ENCODE measurements at regions of chr21 and their contacts with region 1.

Region 1: DNA sequence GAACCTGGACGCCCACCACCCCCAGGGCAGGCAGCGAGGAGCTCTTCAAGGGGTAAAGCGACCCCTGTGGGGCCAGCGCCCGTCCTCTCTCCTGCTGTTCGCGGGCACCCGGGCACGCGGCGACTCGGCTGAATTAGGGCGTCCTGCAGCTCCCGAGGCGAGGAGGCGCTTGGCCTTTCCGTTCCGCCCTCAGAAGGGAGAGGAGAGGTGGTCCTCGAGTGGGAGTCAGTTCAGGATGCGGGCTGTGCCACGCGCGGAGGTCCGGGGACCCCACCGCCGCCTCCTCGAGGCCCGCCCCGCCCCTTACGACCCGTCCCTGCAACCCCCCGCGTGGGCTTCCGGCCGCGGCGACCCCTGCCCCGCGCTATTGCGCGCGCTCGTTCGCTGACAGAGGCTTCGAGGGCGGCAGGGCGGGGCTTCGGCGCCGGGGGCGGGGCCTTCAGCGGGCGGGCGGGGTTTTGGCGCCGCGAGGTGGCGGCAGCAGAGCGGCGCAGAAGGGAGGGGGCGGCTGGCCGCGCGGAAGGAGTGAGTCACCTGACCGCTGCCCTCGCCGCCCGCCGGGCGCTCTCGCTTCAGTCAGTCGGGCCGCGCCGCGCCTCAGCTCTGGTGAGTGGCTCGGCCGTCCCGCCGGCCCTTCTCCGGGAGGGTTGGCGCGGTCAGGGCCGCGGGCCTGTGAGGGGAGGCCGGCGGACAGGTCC is at the start of gene BACH1:
- DNase-seq: peak; percentile 76 to 89
- ATAC-seq: peak; percentile 69 to 72
- H3K4me3 ChIP-seq: peak within 1 kb of the TSS; percentile 69 to 87 (median 72)
- H3K27ac ChIP-seq: peak within 1 kb of the TSS; percentile 89 to 97 (median 94)
- H3K4me1 ChIP-seq: peaks cover 34 to 36% of the 10 kb centered on the region in 2 donors
- H3K27me3 ChIP-seq: no peaks in the 10 kb centered on the region
- CTCF ChIP-seq: peak in 3 of 5 experiments; percentile 55 to 69 (median 64)
- POLR2A ChIP-seq: peak; percentile 93 to 94
- total RNA-seq, gene BACH1: 52.4 to 72.7 (median 62.7) TPM

Region 2: GRCh38 chr21:29078869-29079767 is 219.4 kb before region 1 on chr21:
- in situ Hi-C with region 1: loop called in 2 of 4 experiments (anchors 10 to 25 kb)
- intact Hi-C with region 1: loop called (anchors 5 kb)
- DNase-seq: no peak
- ATAC-seq: no peak
- H3K4me3 ChIP-seq: no peak overlapping the region
- H3K27ac ChIP-seq: no peak overlapping the region
- H3K4me1 ChIP-seq: no peaks in the 10 kb centered on the region
- H3K27me3 ChIP-seq: no peaks in the 10 kb centered on the region
- CTCF ChIP-seq: no peak
- POLR2A ChIP-seq: no peak

Region 3: DNA sequence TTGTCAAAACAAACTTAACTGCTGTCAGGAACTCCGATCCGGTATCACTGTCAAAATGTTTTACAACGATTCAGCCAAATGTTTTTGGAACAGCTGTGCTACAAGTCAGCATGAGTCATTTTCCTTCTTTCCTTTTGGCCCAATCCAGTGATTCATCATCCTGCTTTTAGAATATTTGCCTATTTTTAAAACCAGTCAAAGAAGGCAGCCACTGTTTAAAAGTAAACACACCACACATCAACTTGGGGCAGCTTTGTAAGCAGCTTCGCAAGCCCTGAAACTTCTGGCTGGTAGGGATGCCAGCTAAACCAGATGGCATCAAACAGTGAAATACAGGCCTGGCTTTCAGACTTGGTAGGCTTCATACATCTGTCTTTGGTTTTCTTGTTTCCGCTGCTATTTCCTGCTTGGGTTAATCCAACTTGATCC is 153.1 kb before region 1 on chr21:
- in situ Hi-C with region 1: loop called in 1 of 4 experiments (anchors 25 kb)
- intact Hi-C with region 1: loop called (anchors 5 kb)
- DNase-seq: peak; percentile 74 to 81
- ATAC-seq: peak; percentile 93 to 94
- H3K4me3 ChIP-seq: no peak overlapping the region
- H3K27ac ChIP-seq: peak overlapping the region; percentile 78 to 91 (median 84)
- H3K4me1 ChIP-seq: peaks cover 59 to 60% of the 10 kb centered on the region in 2 donors
- H3K27me3 ChIP-seq: no peaks in the 10 kb centered on the region
- CTCF ChIP-seq: no peak
- POLR2A ChIP-seq: peak in 1 of 2 donors; percentile 41

Region 4: DNA sequence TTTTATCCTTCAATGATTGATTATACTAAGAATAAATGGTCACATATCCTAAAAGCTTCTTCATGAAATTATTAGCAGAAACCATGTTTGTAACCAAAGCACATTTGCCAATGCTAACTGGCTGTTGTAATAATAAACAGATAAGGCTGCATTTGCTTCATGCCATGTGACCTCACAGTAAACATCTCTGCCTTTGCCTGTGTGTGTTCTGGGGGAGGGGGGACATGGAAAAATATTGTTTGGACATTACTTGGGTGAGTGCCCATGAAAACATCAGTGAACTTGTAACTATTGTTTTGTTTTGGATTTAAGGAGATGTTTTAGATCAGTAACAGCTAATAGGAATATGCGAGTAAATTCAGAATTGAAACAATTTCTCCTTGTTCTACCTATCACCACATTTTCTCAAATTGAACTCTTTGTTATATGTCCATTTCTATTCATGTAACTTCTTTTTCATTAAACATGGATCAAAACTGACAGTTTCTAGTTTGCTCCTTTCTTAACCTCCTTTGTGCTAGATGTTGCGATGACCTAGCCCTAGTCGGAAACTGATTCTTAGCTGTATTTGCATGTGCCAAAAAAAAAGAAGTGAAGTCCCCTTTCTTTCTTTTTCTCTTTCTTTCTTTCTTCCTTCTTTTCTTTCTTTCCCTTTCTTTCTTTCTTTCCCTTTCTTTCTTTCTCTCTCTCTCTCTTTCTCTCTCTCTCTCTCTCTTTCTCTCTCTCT is 122.9 kb before region 1 on chr21:
- in situ Hi-C with region 1: loop called in 2 of 4 experiments (anchors 10 to 25 kb)
- intact Hi-C with region 1: no loop called
- DNase-seq: no peak
- ATAC-seq: no peak
- H3K4me3 ChIP-seq: no peak overlapping the region
- H3K27ac ChIP-seq: no peak overlapping the region
- H3K4me1 ChIP-seq: peaks cover 5 to 11% of the 10 kb centered on the region in 2 donors
- H3K27me3 ChIP-seq: no peaks in the 10 kb centered on the region
- CTCF ChIP-seq: no peak
- POLR2A ChIP-seq: no peak

Region 5: GRCh38 chr21:29332461-29333362 is 34.2 kb after region 1 on chr21:
- in situ Hi-C with region 1: no loop called
- intact Hi-C with region 1: loop called (anchors 1 kb)
- DNase-seq: peak; percentile 64 to 72
- ATAC-seq: peak; percentile 92 to 94
- H3K4me3 ChIP-seq: peak overlapping the region in 3 of 4 donors; percentile 12 to 31 (median 16)
- H3K27ac ChIP-seq: peak overlapping the region; percentile 85 to 92 (median 88)
- H3K4me1 ChIP-seq: peaks cover 75 to 82% of the 10 kb centered on the region in 2 donors
- H3K27me3 ChIP-seq: no peaks in the 10 kb centered on the region
- CTCF ChIP-seq: no peak
- POLR2A ChIP-seq: peak in 1 of 2 donors; percentile 45

Region 6: GRCh38 chr21:29351691-29352090 is 53.2 kb after region 1 on chr21:
- in situ Hi-C with region 1: loop called in 1 of 4 experiments (anchors 10 kb)
- intact Hi-C with region 1: no loop called
- DNase-seq: no peak
- ATAC-seq: no peak
- H3K4me3 ChIP-seq: no peak overlapping the region
- H3K27ac ChIP-seq: no peak overlapping the region
- H3K4me1 ChIP-seq: peaks cover 7 to 12% of the 10 kb centered on the region in 2 donors
- H3K27me3 ChIP-seq: no peaks in the 10 kb centered on the region
- CTCF ChIP-seq: no peak
- POLR2A ChIP-seq: no peak

Measured in gastrocnemius medialis (tissue), 4 donors.